Natural killer cell (primary cell): ENCODE measurements at regions of chr20 and their contacts with region 1.

Region 1: DNA sequence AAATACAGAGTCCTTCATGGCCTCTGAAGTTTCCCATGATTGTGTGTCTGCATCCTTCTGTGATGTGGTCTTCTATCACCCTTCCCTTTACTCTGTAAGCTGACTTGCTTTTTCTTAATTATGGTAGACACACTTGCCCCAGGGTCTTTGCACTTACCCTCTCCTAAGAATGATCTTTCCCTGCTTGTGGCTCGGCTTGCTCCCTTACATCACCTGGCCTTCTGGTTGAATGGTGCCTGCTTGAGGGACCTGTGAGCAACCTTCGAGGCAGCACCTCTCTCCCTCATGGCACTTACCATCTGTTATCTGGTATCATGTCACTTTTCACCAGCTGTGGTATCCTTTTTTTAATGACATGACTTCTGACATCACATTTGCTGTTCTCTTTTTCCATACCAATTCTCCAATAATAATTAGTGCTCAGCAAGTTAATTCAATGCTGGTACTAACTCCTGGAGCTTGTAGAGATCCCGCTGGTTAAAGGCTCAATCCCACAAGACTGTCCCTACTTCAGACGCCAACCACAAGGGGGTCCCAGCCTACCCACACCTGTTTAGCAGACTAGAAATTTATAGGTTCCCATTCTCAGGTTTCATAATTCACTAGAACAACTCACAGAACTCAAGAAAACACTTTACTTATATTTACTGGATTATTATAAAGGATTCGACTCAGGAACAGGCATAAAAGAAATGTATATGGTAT is 45.6 kb downstream of the DOK5 start:
- DNase-seq: no peak
- ATAC-seq: no peak
- H3K4me3 ChIP-seq: no peak overlapping the region
- H3K4me3 Mint-ChIP-seq: no peak overlapping the region
- H3K27ac ChIP-seq: no peak overlapping the region
- H3K27ac Mint-ChIP-seq: no peak overlapping the region
- H3K4me1 ChIP-seq: no peaks in the 10 kb centered on the region
- H3K4me1 Mint-ChIP-seq: no peaks in the 10 kb centered on the region
- H3K27me3 ChIP-seq: no peaks in the 10 kb centered on the region
- H3K27me3 Mint-ChIP-seq: peaks cover 0 to 4% of the 10 kb centered on the region in 2 donors
- CTCF ChIP-seq: no peak

Region 2: DNA sequence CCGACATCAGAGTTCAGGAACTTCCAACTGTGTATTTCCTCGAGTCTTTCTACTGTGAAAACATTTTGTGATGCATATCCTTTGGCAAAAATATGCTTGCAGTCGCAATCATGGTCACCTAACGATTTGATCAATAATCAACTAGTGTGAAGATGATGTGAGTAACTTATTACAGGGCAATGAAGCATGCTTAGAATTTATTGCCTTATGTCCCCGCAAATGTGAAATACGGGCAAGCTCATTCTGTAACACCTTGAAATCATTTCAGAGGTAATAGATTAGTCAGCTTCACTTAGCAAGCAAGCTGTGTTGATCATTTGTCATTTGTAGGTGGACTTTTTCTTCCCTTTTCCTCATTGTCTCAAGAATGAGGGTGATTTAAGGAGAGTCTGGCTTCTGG is 113.5 kb before region 1 on chr20:
- intact Hi-C with region 1: no loop called
- DNase-seq: no peak
- ATAC-seq: no peak
- H3K4me3 ChIP-seq: no peak overlapping the region
- H3K4me3 Mint-ChIP-seq: no peak overlapping the region
- H3K27ac ChIP-seq: no peak overlapping the region
- H3K27ac Mint-ChIP-seq: no peak overlapping the region
- H3K4me1 ChIP-seq: no peaks in the 10 kb centered on the region
- H3K4me1 Mint-ChIP-seq: no peaks in the 10 kb centered on the region
- H3K27me3 ChIP-seq: peaks cover 3% of the 10 kb centered on the region
- H3K27me3 Mint-ChIP-seq: peaks cover 0 to 8% of the 10 kb centered on the region in 2 donors
- CTCF ChIP-seq: no peak

Region 3: DNA sequence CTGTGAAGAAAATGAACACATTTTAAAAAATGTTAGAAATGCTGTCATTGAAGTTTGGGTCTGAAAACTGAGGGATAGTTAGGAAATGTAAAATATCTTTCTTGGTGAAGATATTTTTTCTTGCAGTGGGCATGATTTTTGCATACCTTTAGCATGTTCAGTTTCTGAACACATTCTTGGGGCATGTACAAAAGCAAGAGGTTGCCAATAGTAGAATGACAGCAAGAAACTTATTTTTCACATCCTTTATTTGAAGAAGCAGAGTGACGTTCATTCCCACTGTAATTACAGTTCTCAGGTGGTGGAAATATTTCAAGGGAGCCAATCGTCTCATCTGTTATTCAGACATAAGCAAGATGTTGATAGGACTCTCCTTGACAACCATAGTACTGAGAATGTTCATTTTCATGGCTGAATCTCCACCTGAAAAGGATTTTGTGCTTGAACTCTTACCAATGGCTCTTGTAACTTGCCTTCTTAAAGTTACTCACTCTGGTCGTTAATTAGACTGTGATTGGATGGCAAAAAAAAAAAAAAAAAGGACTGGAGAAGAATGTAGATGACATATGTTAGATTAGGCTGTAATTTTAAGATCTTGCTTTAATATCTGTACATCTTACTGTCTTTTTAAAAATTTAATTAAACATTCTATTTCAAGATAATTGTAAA is 28.8 kb after region 1 on chr20:
- intact Hi-C with region 1: loop called (anchors 1 kb)
- DNase-seq: no peak
- ATAC-seq: no peak
- H3K4me3 ChIP-seq: no peak overlapping the region
- H3K4me3 Mint-ChIP-seq: no peak overlapping the region
- H3K27ac ChIP-seq: no peak overlapping the region
- H3K27ac Mint-ChIP-seq: no peak overlapping the region
- H3K4me1 ChIP-seq: no peaks in the 10 kb centered on the region
- H3K4me1 Mint-ChIP-seq: no peaks in the 10 kb centered on the region
- H3K27me3 ChIP-seq: no peaks in the 10 kb centered on the region
- H3K27me3 Mint-ChIP-seq: no peaks in the 10 kb centered on the region
- CTCF ChIP-seq: no peak